ENCODE measurements at regions of chr2 and their contacts with region 1.

Region 1: GRCh38 chr2:227479865-227480475 is 8.0 kb downstream of the AGFG1 start:
- DNase-seq: no peak
- ATAC-seq: peak in 1 of 2 donors; percentile 73
- H3K4me3 ChIP-seq: no peak overlapping the region
- H3K27ac ChIP-seq: no peak overlapping the region
- H3K4me1 ChIP-seq: peaks cover 28 to 44% of the 10 kb centered on the region in 2 donors
- H3K27me3 ChIP-seq: no peaks in the 10 kb centered on the region
- CTCF ChIP-seq: peak in 2 of 5 experiments; percentile 8 to 39
- POLR2A ChIP-seq: no peak

Region 2: GRCh38 chr2:227774011-227774624 is 294.1 kb after region 1 on chr2:
- in situ Hi-C with region 1: loop called in 3 of 4 experiments (anchors 5 to 25 kb)
- intact Hi-C with region 1: no loop called
- DNase-seq: no peak
- ATAC-seq: no peak
- H3K4me3 ChIP-seq: no peak overlapping the region
- H3K27ac ChIP-seq: no peak overlapping the region
- H3K4me1 ChIP-seq: no peaks in the 10 kb centered on the region
- H3K27me3 ChIP-seq: no peaks in the 10 kb centered on the region
- CTCF ChIP-seq: no peak
- POLR2A ChIP-seq: no peak